PC-3 (cell line): ENCODE measurements at regions of chr12 and their contacts with region 1.

Region 1: DNA sequence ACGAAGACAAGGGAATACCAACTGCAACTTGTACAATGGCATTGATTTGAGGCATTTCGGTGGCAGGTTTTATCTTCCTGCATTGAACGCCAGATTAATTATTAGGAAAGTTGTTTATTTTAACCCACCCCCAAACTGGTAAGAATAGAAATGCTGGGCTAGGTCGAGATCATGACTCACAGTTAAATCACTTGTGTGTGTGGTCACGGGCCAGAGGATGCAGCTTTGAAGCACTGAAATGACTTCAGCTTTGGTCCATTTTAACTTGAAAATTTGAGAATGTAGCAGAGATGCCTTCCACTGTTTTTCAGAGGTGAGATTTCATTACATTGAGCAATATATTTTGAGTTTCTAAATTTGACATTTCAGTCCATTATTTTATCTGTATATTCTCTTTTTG is 23.6 kb upstream of the KCNH3 start:
- DNase-seq: peak; percentile 88
- ATAC-seq: peak; percentile 76
- H3K4me3 ChIP-seq: peak overlapping the region; percentile 23; the same call in 1 of the 2 replicates
- H3K27ac ChIP-seq: peak overlapping the region; percentile 44
- H3K4me1 ChIP-seq: peaks cover 40% of the 10 kb centered on the region
- H3K27me3 ChIP-seq: no peaks in the 10 kb centered on the region
- CTCF ChIP-seq: no peak

Region 2: GRCh38 chr12:49288412-49288853 is 226.8 kb before region 1 on chr12:
- CTCF ChIA-PET with region 1: interaction called, 9 read pairs
- POLR2A ChIA-PET with region 1: no interaction called
- intact Hi-C with region 1: loop called (anchors 10 kb)
- DNase-seq: peak; percentile 74
- ATAC-seq: peak; percentile 49; the same call in 1 of the 2 replicates
- H3K4me3 ChIP-seq: no peak overlapping the region
- H3K27ac ChIP-seq: no peak overlapping the region
- H3K4me1 ChIP-seq: no peaks in the 10 kb centered on the region
- H3K27me3 ChIP-seq: no peaks in the 10 kb centered on the region
- CTCF ChIP-seq: peak; percentile 96

Region 3: GRCh38 chr12:49358483-49359141 is 156.7 kb before region 1 on chr12:
- CTCF ChIA-PET with region 1: interaction called, 63 read pairs
- POLR2A ChIA-PET with region 1: interaction called, 3 read pairs
- intact Hi-C with region 1: loop called (anchors 1 kb)
- DNase-seq: peak; percentile 63
- ATAC-seq: peak; percentile 89
- H3K4me3 ChIP-seq: 0 out of 2 replicates have a peak overlapping the region, but pooled peaks have one; percentile 2
- H3K27ac ChIP-seq: no peak overlapping the region
- H3K4me1 ChIP-seq: peaks cover 21% of the 10 kb centered on the region
- H3K27me3 ChIP-seq: no peaks in the 10 kb centered on the region
- CTCF ChIP-seq: peak; percentile 92

Region 4: GRCh38 chr12:49489720-49490119 is 25.5 kb before region 1 on chr12:
- CTCF ChIA-PET with region 1: no interaction called
- POLR2A ChIA-PET with region 1: no interaction called
- intact Hi-C with region 1: loop called (anchors 2 kb)
- DNase-seq: peak; percentile 75
- ATAC-seq: peak; percentile 85
- H3K4me3 ChIP-seq: no peak overlapping the region
- H3K27ac ChIP-seq: peak overlapping the region; percentile 51
- H3K4me1 ChIP-seq: peaks cover 23% of the 10 kb centered on the region
- H3K27me3 ChIP-seq: no peaks in the 10 kb centered on the region
- CTCF ChIP-seq: peak; percentile 44

Region 5: GRCh38 chr12:49720214-49720613 is 204.9 kb after region 1 on chr12:
- CTCF ChIA-PET with region 1: no interaction called
- POLR2A ChIA-PET with region 1: no interaction called
- intact Hi-C with region 1: no loop called
- DNase-seq: peak; percentile 27
- ATAC-seq: peak; percentile 54; the same call in 1 of the 2 replicates
- H3K4me3 ChIP-seq: no peak overlapping the region
- H3K27ac ChIP-seq: no peak overlapping the region
- H3K4me1 ChIP-seq: no peaks in the 10 kb centered on the region
- H3K27me3 ChIP-seq: no peaks in the 10 kb centered on the region
- CTCF ChIP-seq: peak; percentile 55

Region 6: DNA sequence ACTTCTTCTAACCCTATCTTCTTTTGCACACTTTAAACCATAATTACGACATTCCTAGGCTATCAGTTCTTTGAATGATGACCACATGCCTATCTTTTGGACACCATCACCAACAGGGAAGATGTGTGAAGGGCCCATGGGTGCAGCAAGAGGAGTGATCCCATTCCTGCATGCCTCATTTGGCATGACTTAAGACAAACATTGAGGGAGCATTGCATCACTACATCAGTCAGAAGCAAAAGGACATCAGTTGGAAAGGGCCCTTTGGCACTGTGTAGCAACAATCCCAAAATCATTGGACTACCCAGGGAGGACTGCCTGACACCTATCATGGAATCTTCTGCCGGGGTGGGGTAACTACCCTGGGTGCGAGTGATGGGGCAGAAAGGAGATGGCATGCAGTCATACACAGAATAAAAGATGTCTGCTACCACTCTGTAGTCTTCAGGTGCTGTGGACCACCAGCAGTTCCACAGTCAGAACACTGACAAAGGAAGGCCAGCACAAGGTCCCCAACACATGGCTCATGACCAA is 215.4 kb after region 1 on chr12:
- CTCF ChIA-PET with region 1: interaction called, 10 read pairs
- POLR2A ChIA-PET with region 1: no interaction called
- intact Hi-C with region 1: no loop called
- DNase-seq: peak; percentile 16
- ATAC-seq: peak; percentile 29; the same call in 1 of the 2 replicates
- H3K4me3 ChIP-seq: no peak overlapping the region
- H3K27ac ChIP-seq: no peak overlapping the region
- H3K4me1 ChIP-seq: no peaks in the 10 kb centered on the region
- H3K27me3 ChIP-seq: no peaks in the 10 kb centered on the region
- CTCF ChIP-seq: no peak